GM12878 (cell line): ENCODE measurements at regions of chr13 and their contacts with region 1.

Region 1: GRCh38 chr13:26186118-26186870 is 35.8 kb downstream of the RNF6 start:
- DNase-seq: peak; percentile 66
- ATAC-seq: peak; percentile 93
- H3K4me3 ChIP-seq: peak overlapping the region; percentile 74
- H3K27ac ChIP-seq: peak overlapping the region; percentile 39
- H3K4me1 ChIP-seq: peaks cover 9% of the 10 kb centered on the region
- H3K27me3 ChIP-seq: no peaks in the 10 kb centered on the region
- CTCF ChIP-seq: peak; percentile 54 to 65 (median 60)
- EP300 ChIP-seq: no peak
- POLR2A ChIP-seq: peak; percentile 90
- RAD21 ChIP-seq: peak; percentile 49

Region 2: GRCh38 chr13:25415241-25415640 is 771.1 kb before region 1 on chr13:
- CTCF ChIA-PET with region 1: no interaction called
- POLR2A ChIA-PET with region 1: no interaction called
- RAD21 ChIA-PET with region 1: no interaction called
- SMC1A ChIA-PET with region 1: no interaction called
- in situ Hi-C with region 1: no loop called
- intact Hi-C with region 1: no loop called
- DNase-seq: no peak
- ATAC-seq: no peak
- H3K4me3 ChIP-seq: no peak overlapping the region
- H3K27ac ChIP-seq: no peak overlapping the region
- H3K4me1 ChIP-seq: no peaks in the 10 kb centered on the region
- H3K27me3 ChIP-seq: no peaks in the 10 kb centered on the region
- CTCF ChIP-seq: no peak
- EP300 ChIP-seq: no peak
- POLR2A ChIP-seq: no peak
- RAD21 ChIP-seq: no peak

Region 3: GRCh38 chr13:26132756-26133155 is 53.5 kb before region 1 on chr13:
- CTCF ChIA-PET with region 1: no interaction called
- POLR2A ChIA-PET with region 1: no interaction called
- RAD21 ChIA-PET with region 1: no interaction called
- SMC1A ChIA-PET with region 1: no interaction called
- in situ Hi-C with region 1: loop called (anchors 5 kb)
- intact Hi-C with region 1: no loop called
- DNase-seq: no peak
- ATAC-seq: no peak
- H3K4me3 ChIP-seq: no peak overlapping the region
- H3K27ac ChIP-seq: no peak overlapping the region
- H3K4me1 ChIP-seq: no peaks in the 10 kb centered on the region
- H3K27me3 ChIP-seq: no peaks in the 10 kb centered on the region
- CTCF ChIP-seq: peak; percentile 13 to 21 (median 21); a peak in 3 of 6 replicates
- EP300 ChIP-seq: no peak
- POLR2A ChIP-seq: no peak
- RAD21 ChIP-seq: no peak

Region 4: DNA sequence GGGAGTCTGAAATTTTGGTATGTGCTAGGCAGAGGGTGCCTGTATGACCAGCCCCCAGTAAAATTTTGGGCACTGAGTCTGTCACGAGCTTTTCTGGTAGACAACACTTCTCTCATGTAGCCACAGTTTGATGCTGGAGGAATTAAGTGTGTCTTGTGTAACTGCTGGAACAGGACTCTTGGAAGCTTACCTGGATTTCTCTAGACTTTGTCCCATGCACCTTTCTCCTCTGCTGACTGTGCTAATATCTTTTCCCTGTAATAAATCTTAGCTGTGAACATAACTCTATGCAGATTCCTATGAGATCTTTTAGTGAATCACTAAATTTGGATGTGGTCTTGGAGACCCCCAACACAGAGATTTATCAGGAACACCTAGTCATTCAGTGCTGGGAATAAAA is 22.0 kb after region 1 on chr13:
- CTCF ChIA-PET with region 1: interaction called, 10 read pairs
- POLR2A ChIA-PET with region 1: no interaction called
- RAD21 ChIA-PET with region 1: no interaction called
- SMC1A ChIA-PET with region 1: no interaction called
- in situ Hi-C with region 1: no loop called
- intact Hi-C with region 1: no loop called
- DNase-seq: no peak
- ATAC-seq: no peak
- H3K4me3 ChIP-seq: no peak overlapping the region
- H3K27ac ChIP-seq: no peak overlapping the region
- H3K4me1 ChIP-seq: no peaks in the 10 kb centered on the region
- H3K27me3 ChIP-seq: no peaks in the 10 kb centered on the region
- CTCF ChIP-seq: no peak
- EP300 ChIP-seq: no peak
- POLR2A ChIP-seq: no peak
- RAD21 ChIP-seq: no peak

Region 5: GRCh38 chr13:26377038-26377437 is 190.7 kb after region 1 on chr13:
- CTCF ChIA-PET with region 1: interaction called, 4 read pairs
- POLR2A ChIA-PET with region 1: no interaction called
- RAD21 ChIA-PET with region 1: no interaction called
- SMC1A ChIA-PET with region 1: no interaction called
- in situ Hi-C with region 1: no loop called
- intact Hi-C with region 1: loop called (anchors 10 kb)
- DNase-seq: no peak
- ATAC-seq: peak; percentile 77
- H3K4me3 ChIP-seq: no peak overlapping the region
- H3K27ac ChIP-seq: no peak overlapping the region
- H3K4me1 ChIP-seq: no peaks in the 10 kb centered on the region
- H3K27me3 ChIP-seq: no peaks in the 10 kb centered on the region
- CTCF ChIP-seq: peak in 2 of 3 experiments; percentile 20 to 31; a peak in 2 of 6 replicates
- EP300 ChIP-seq: no peak
- POLR2A ChIP-seq: no peak
- RAD21 ChIP-seq: no peak

Region 6: GRCh38 chr13:26482451-26483197 is 296.3 kb after region 1 on chr13:
- CTCF ChIA-PET with region 1: interaction called, 30 read pairs
- POLR2A ChIA-PET with region 1: no interaction called
- RAD21 ChIA-PET with region 1: interaction called, 7 read pairs
- SMC1A ChIA-PET with region 1: interaction called, 6 read pairs
- in situ Hi-C with region 1: no loop called
- intact Hi-C with region 1: no loop called
- DNase-seq: peak; percentile 23
- ATAC-seq: peak; percentile 82
- H3K4me3 ChIP-seq: no peak overlapping the region
- H3K27ac ChIP-seq: no peak overlapping the region
- H3K4me1 ChIP-seq: no peaks in the 10 kb centered on the region
- H3K27me3 ChIP-seq: no peaks in the 10 kb centered on the region; a peak in 1 of 4 replicates
- CTCF ChIP-seq: peak; percentile 71 to 90 (median 82)
- EP300 ChIP-seq: no peak
- POLR2A ChIP-seq: no peak
- RAD21 ChIP-seq: peak; percentile 47; the same call in 1 of the 2 replicates

Region 7: GRCh38 chr13:26601669-26602068 is 415.4 kb after region 1 on chr13:
- CTCF ChIA-PET with region 1: interaction called, 9 read pairs
- POLR2A ChIA-PET with region 1: no interaction called
- RAD21 ChIA-PET with region 1: no interaction called
- SMC1A ChIA-PET with region 1: no interaction called
- in situ Hi-C with region 1: no loop called
- intact Hi-C with region 1: loop called (anchors 10 kb)
- DNase-seq: peak; percentile 15
- ATAC-seq: peak; percentile 82
- H3K4me3 ChIP-seq: no peak overlapping the region
- H3K27ac ChIP-seq: no peak overlapping the region
- H3K4me1 ChIP-seq: no peaks in the 10 kb centered on the region
- H3K27me3 ChIP-seq: no peaks in the 10 kb centered on the region
- CTCF ChIP-seq: peak in 1 of 3 experiments; percentile 17; a peak in 1 of 6 replicates
- EP300 ChIP-seq: no peak
- POLR2A ChIP-seq: no peak
- RAD21 ChIP-seq: no peak